Esophagus muscularis mucosa (tissue), 4 donors: ENCODE measurements at regions of chr7 and their contacts with region 1.

Region 1: GRCh38 chr7:157432957-157433576 is 96.3 kb downstream of the DNAJB6 start:
- DNase-seq: no peak
- H3K4me3 ChIP-seq: peak overlapping the region; percentile 1 to 24 (median 20)
- H3K27ac ChIP-seq: no peak overlapping the region
- H3K4me1 ChIP-seq: peaks cover 6 to 11% (median 9%) of the 10 kb centered on the region in 4 donors
- H3K27me3 ChIP-seq: peaks cover 0 to 7% (median 0%) of the 10 kb centered on the region in 4 donors
- CTCF ChIP-seq: peak; percentile 55 to 72 (median 60)
- EP300 ChIP-seq: no peak
- POLR2A ChIP-seq: no peak

Region 2: GRCh38 chr7:157881048-157881771 is 448.1 kb after region 1 on chr7:
- intact Hi-C with region 1: loop called (anchors 10 kb)
- DNase-seq: no peak
- H3K4me3 ChIP-seq: no peak overlapping the region
- H3K27ac ChIP-seq: no peak overlapping the region
- H3K4me1 ChIP-seq: no peaks in the 10 kb centered on the region
- H3K27me3 ChIP-seq: peaks cover 0 to 13% (median 0%) of the 10 kb centered on the region in 4 donors
- CTCF ChIP-seq: no peak
- EP300 ChIP-seq: no peak
- POLR2A ChIP-seq: no peak

Region 3: DNA sequence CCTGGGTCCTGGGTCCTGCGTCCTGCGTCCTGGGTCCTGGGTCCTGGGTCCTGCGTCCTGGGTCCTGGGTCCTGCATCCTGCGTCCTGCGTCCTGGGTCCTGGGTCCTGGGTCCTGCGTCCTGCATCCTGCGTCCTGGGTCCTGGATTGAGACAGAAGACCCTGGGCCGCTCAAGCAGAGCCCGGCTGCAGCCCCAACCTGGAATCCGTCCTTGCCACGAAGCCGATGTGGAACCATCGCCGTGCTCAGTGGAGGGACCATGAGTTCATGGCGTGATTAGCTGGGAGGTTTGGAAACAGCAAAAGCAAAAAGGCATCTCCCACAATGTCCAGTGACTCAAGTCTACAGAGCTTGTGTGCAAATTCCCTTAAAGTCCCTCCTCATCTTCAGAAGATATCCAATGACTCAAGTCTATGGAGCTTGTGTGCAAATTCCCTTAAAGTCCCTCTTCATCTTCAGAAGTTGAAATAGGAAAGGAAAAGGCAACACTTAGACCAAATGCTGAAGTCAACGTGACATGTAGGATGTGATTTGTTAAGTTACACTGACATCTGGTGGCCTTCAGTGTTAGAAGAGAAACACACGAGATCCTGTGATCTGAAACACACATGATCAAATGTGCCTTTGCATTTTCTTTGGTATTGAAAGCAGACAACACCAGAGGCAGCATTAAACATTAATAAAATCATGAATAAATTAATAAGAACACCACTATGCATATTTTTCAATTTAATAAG is 974.7 kb after region 1 on chr7:
- intact Hi-C with region 1: loop called (anchors 5 kb)
- DNase-seq: no peak
- H3K4me3 ChIP-seq: no peak overlapping the region
- H3K27ac ChIP-seq: no peak overlapping the region
- H3K4me1 ChIP-seq: no peaks in the 10 kb centered on the region
- H3K27me3 ChIP-seq: peaks cover 0 to 9% (median 0%) of the 10 kb centered on the region in 4 donors
- CTCF ChIP-seq: peak in 2 of 3 experiments; percentile 8 to 15
- EP300 ChIP-seq: no peak
- POLR2A ChIP-seq: no peak